ENCODE measurements at regions of chr15 and their contacts with region 1.

Region 1: GRCh38 chr15:98421419-98422129 is 226.8 kb upstream of the IGF1R start:
- DNase-seq: no peak
- ATAC-seq: peak; percentile 89
- H3K4me3 ChIP-seq: peak overlapping the region; percentile 29 to 43
- H3K27ac ChIP-seq: no peak overlapping the region
- H3K4me1 ChIP-seq: peaks cover 8% of the 10 kb centered on the region; the same call in 1 of the 2 replicates
- H3K27me3 ChIP-seq: peaks cover 2% of the 10 kb centered on the region; the same call in 1 of the 2 replicates
- CTCF ChIP-seq: peak; percentile 98

Region 2: GRCh38 chr15:97903971-97904572 is 517.5 kb before region 1 on chr15:
- CTCF ChIA-PET with region 1: interaction called, 4 read pairs
- POLR2A ChIA-PET with region 1: no interaction called
- in situ Hi-C with region 1: no loop called
- intact Hi-C with region 1: loop called (anchors 5 kb)
- DNase-seq: no peak
- ATAC-seq: peak; percentile 97
- H3K4me3 ChIP-seq: no peak overlapping the region
- H3K27ac ChIP-seq: no peak overlapping the region
- H3K4me1 ChIP-seq: no peaks in the 10 kb centered on the region
- H3K27me3 ChIP-seq: peaks cover 22% of the 10 kb centered on the region
- CTCF ChIP-seq: peak; percentile 89

Region 3: GRCh38 chr15:98085003-98085639 is 336.5 kb before region 1 on chr15:
- CTCF ChIA-PET with region 1: no interaction called
- POLR2A ChIA-PET with region 1: no interaction called
- in situ Hi-C with region 1: no loop called
- intact Hi-C with region 1: loop called (anchors 5 kb)
- DNase-seq: peak; percentile 36
- ATAC-seq: no peak
- H3K4me3 ChIP-seq: no peak overlapping the region
- H3K27ac ChIP-seq: no peak overlapping the region
- H3K4me1 ChIP-seq: no peaks in the 10 kb centered on the region
- H3K27me3 ChIP-seq: no peaks in the 10 kb centered on the region
- CTCF ChIP-seq: peak; percentile 64; the same call in 1 of the 2 replicates

Region 4: GRCh38 chr15:98311566-98312188 is 109.9 kb before region 1 on chr15:
- CTCF ChIA-PET with region 1: interaction called, 13 read pairs
- POLR2A ChIA-PET with region 1: no interaction called
- in situ Hi-C with region 1: no loop called
- intact Hi-C with region 1: loop called (anchors 1 kb)
- DNase-seq: peak; percentile 47
- ATAC-seq: peak; percentile 69; the same call in 1 of the 2 replicates
- H3K4me3 ChIP-seq: no peak overlapping the region
- H3K27ac ChIP-seq: no peak overlapping the region
- H3K4me1 ChIP-seq: no peaks in the 10 kb centered on the region
- H3K27me3 ChIP-seq: peaks cover 4% of the 10 kb centered on the region; the same call in 1 of the 2 replicates
- CTCF ChIP-seq: peak; percentile 84